Activated T-helper 1 cell treated with anti-CD3 and anti-CD28 coated beads, Interleukin-12 subunit alpha, Interleukin-12 subunit beta, Interleukin-2, Interleukin-4 antibody, amounts not matched to agents 30 ng/mL and 10 ng/mL and 1 ng/mL, durations not matched to agents 14 hours and 24 hours and 36 hours (primary cell): ENCODE measurements at regions of chr1 and their contacts with region 1.

Region 1: GRCh38 chr1:92749024-92749634 is 35.8 kb downstream of the EVI5 start:
- DNase-seq: peak; percentile 2
- H3K4me3 Mint-ChIP-seq: no peak overlapping the region
- H3K27ac Mint-ChIP-seq: no peak overlapping the region
- H3K4me1 Mint-ChIP-seq: no peaks in the 10 kb centered on the region
- H3K27me3 Mint-ChIP-seq: peaks cover 9% of the 10 kb centered on the region

Region 2: DNA sequence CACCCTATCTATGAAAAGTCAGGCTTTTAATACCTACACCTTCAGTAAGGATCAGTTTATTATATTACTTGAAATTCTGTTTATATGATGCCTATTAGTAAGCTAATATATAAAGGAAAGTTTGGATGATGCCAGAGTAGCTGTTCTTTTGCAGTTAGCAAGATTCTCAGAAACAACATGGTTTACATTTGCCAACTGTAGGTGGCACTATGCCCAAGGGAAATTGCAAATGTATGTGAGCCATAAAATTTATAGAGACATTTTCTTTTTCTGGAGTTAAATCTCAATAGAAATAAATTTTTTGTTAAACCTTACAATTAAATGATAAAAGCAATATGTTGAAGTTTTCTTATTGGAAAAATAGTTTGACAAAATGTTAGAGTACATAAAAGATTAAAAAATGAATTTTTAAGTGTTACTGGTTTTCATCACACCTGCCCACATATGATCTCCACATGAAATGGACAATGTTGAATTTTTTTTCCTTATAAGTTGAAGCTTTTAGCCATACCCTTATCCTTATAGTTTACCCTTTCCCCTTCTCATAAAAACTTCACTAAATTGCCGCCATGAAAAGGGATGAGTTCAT is 751.4 kb before region 1 on chr1:
- intact Hi-C with region 1: loop called (anchors 10 kb)
- DNase-seq: peak; percentile 2
- H3K4me3 Mint-ChIP-seq: no peak overlapping the region
- H3K27ac Mint-ChIP-seq: no peak overlapping the region
- H3K4me1 Mint-ChIP-seq: no peaks in the 10 kb centered on the region
- H3K27me3 Mint-ChIP-seq: peaks cover 10% of the 10 kb centered on the region

Region 3: GRCh38 chr1:92817986-92818764 is 69.0 kb after region 1 on chr1:
- intact Hi-C with region 1: loop called (anchors 1 kb)
- DNase-seq: no peak
- H3K4me3 Mint-ChIP-seq: no peak overlapping the region
- H3K27ac Mint-ChIP-seq: no peak overlapping the region
- H3K4me1 Mint-ChIP-seq: no peaks in the 10 kb centered on the region
- H3K27me3 Mint-ChIP-seq: peaks cover 23% of the 10 kb centered on the region

Region 4: DNA sequence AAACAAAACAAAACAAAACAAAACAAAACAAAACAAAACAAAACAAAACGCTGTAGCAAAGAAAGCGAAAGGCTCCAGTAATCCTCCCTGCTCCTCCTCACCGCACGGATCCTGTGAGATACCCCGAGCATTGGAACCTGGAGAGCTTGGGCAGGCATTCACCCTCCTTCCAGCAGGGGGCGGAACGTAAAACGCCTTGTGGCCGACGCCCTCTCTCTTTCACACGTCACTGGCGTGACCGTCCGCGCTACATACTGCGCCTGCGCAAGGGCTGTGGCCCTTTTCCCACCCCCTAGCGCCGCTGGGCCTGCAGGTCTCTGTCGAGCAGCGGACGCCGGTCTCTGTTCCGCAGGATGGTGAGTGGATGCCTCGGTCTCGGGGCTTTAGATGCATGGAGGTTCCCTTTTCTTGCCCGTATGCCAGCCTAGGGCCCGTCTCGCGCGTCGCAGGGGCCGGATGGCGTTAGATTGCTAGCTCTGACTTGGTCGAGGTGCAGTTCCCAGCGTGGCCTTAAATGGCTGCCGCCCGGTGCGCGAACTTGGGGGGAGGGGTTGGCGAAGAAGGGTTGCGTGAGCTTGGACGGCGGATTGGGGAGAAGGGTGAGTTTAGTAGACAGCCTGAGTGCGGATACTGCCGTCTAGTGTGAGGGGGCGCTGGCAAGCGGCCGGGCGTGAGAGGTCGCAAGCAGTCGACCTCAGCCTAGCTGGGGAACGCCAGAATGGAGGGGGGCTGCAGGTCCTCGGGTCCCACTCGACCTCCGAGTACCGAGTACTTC is 82.8 kb after region 1 on chr1 and contains the start of gene RPL5:
- intact Hi-C with region 1: loop called (anchors 1 kb)
- DNase-seq: peak; percentile 96
- H3K4me3 Mint-ChIP-seq: peak within 1 kb of the TSS; percentile 96
- H3K27ac Mint-ChIP-seq: peak within 1 kb of the TSS; percentile 97
- H3K4me1 Mint-ChIP-seq: peaks cover 35% of the 10 kb centered on the region
- H3K27me3 Mint-ChIP-seq: peaks cover 2% of the 10 kb centered on the region
- total RNA-seq, gene RPL5: 1,115 and 1,120 TPM in 2 replicates